Gastrocnemius medialis (tissue), 4 donors: ENCODE measurements at regions of chr1 and their contacts with region 1.

Region 1: GRCh38 chr1:30085811-30086770 is 637.3 kb downstream of the MATN1 start:
- DNase-seq: no peak
- ATAC-seq: no peak
- H3K4me3 ChIP-seq: peak overlapping the region in 1 of 4 donors; percentile 21
- H3K27ac ChIP-seq: no peak overlapping the region
- H3K4me1 ChIP-seq: peaks cover 0 to 3% of the 10 kb centered on the region in 2 donors
- H3K27me3 ChIP-seq: peaks cover 0 to 4% (median 3%) of the 10 kb centered on the region in 3 donors
- CTCF ChIP-seq: peak; percentile 42 to 73 (median 54)
- POLR2A ChIP-seq: no peak

Region 2: GRCh38 chr1:29793101-29793546 is 293.0 kb before region 1 on chr1:
- in situ Hi-C with region 1: loop called in 3 of 4 experiments (anchors 10 to 25 kb)
- intact Hi-C with region 1: loop called (anchors 10 kb)
- DNase-seq: peak; percentile 38 to 65
- ATAC-seq: peak; percentile 36 to 88
- H3K4me3 ChIP-seq: no peak overlapping the region
- H3K27ac ChIP-seq: no peak overlapping the region
- H3K4me1 ChIP-seq: no peaks in the 10 kb centered on the region
- H3K27me3 ChIP-seq: no peaks in the 10 kb centered on the region
- CTCF ChIP-seq: peak in 4 of 5 experiments; percentile 31 to 76 (median 68)
- POLR2A ChIP-seq: no peak